PC-9 (cell line): ENCODE measurements at regions of chr10 and their contacts with region 1.

Region 1: DNA sequence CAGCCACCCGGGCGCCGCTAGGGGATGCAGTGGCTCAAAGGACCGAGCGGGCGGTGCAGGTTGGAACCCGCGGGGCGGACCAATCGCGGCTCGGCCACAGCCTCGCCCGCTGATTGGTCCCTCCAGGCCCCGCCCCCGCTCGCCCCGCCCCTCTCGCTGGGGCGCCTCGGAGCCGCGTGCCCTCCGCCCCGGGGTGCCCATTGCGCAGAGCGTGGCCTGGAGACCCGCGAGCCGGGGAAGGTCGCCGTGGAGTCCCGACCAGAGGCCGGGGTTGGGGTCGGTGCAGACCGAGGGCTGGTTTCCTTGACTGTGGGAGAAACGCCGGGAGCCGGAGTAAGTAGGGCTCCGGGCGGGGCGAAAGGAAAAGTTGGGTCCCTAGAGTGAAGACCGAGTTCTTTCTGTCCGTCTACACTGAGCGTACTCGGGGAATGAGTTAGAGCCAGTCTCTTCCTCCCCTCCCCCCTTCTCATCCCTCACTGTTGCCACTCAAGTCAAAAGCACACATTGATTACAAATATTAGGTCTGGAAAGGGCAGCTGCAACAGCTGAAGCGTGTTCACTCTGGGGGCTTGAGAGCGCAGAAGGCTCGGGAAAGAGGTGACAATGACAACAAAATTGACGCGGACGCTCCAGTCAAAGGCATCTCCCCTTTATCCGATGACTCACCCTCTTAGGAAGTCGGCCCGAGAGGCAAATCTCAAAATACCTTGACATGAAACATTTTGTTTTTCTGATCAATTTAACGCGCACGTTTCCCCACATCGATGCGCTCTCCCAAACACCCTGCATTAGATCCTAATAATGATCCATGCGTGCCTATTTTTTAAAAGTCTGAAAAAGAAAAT is 820 bp upstream of the GATA3 start:
- DNase-seq: peak; percentile 52 to 87
- H3K4me3 ChIP-seq: peak overlapping the region; percentile 59
- H3K27ac ChIP-seq: peak overlapping the region; percentile 87
- H3K4me1 ChIP-seq: no peaks in the 10 kb centered on the region
- H3K27me3 ChIP-seq: no peaks in the 10 kb centered on the region
- CTCF ChIP-seq: no peak; the same call in 1 of the 2 replicates

Region 2: GRCh38 chr10:7561216-7561893 is 492.3 kb before region 1 on chr10:
- CTCF ChIA-PET with region 1: no interaction called
- POLR2A ChIA-PET with region 1: no interaction called
- intact Hi-C with region 1: no loop called
- DNase-seq: no peak
- H3K4me3 ChIP-seq: no peak overlapping the region
- H3K27ac ChIP-seq: no peak overlapping the region
- H3K4me1 ChIP-seq: no peaks in the 10 kb centered on the region
- H3K27me3 ChIP-seq: peaks cover 47% of the 10 kb centered on the region
- CTCF ChIP-seq: no peak

Region 3: GRCh38 chr10:8026346-8027240 is 27.1 kb before region 1 on chr10:
- CTCF ChIA-PET with region 1: no interaction called
- POLR2A ChIA-PET with region 1: no interaction called
- intact Hi-C with region 1: no loop called
- DNase-seq: no peak
- H3K4me3 ChIP-seq: no peak overlapping the region
- H3K27ac ChIP-seq: no peak overlapping the region
- H3K4me1 ChIP-seq: no peaks in the 10 kb centered on the region
- H3K27me3 ChIP-seq: no peaks in the 10 kb centered on the region
- CTCF ChIP-seq: no peak

Region 4: GRCh38 chr10:8193546-8193945 is 139.9 kb after region 1 on chr10:
- CTCF ChIA-PET with region 1: no interaction called
- POLR2A ChIA-PET with region 1: no interaction called
- intact Hi-C with region 1: loop called (anchors 2 kb)
- DNase-seq: peak; percentile 37 to 93
- H3K4me3 ChIP-seq: peak overlapping the region; percentile 52; the same call in 1 of the 2 replicates
- H3K27ac ChIP-seq: peak overlapping the region; percentile 99
- H3K4me1 ChIP-seq: peaks cover 32% of the 10 kb centered on the region
- H3K27me3 ChIP-seq: no peaks in the 10 kb centered on the region
- CTCF ChIP-seq: no peak

Region 5: DNA sequence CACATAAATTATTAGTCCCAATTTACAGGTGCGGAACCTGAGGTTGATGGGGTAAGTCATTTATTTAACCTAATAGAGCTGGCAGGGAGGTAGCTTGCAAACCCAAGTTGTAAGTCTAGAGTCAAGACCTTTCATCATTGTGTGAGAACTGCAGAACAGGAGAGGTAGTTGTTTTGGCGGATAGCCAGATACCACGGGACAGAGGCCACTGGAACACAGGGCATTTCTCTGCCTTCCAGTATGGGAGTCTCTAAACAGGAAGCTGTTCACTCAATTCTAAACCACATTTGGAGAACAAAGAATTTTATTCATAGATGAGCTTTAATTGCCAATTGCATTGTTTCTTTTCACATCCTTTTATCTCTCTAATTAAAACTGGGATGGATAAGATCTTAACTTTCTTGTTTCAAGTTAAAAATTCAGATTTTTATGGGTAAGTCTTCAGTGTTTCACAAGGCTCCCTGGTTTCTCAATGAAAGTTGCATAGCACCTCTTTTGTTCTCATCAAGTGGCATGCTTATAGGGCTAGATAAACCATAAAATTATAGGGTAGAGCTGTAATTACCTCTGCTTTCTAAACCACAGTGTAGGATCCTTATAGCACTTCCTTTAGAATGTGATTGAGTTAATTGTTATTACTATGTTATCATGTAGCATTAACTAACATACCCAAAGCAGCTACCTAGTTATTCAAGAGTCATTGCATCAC is 489.8 kb after region 1 on chr10:
- CTCF ChIA-PET with region 1: no interaction called
- POLR2A ChIA-PET with region 1: interaction called, 4 read pairs
- intact Hi-C with region 1: loop called (anchors 10 kb)
- DNase-seq: peak; percentile 68 to 85
- H3K4me3 ChIP-seq: no peak overlapping the region; the same call in 1 of the 2 replicates
- H3K27ac ChIP-seq: peak overlapping the region; percentile 99
- H3K4me1 ChIP-seq: peaks cover 39% of the 10 kb centered on the region
- H3K27me3 ChIP-seq: no peaks in the 10 kb centered on the region
- CTCF ChIP-seq: no peak

Region 6: DNA sequence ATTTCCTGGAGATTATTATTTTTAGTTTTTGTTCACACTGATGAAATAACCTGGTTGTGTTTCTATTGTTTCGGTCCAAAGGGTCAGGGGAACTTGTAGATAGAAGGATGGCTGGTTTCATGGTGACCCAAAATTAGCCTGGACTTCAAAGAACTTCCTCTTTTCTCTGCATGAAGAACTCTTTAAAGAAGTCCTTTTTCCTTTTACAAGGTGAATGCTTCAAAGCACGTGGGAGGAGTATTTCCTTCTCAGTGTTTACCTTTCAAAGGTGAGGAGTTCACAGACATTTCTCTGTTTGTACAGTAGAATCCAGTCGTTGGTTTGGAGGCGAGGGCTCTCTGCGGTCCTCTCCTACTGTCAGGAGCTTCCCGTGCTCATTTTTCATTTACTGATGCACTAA is 562.5 kb after region 1 on chr10:
- CTCF ChIA-PET with region 1: no interaction called
- POLR2A ChIA-PET with region 1: no interaction called
- intact Hi-C with region 1: loop called (anchors 5 kb)
- DNase-seq: peak; percentile 43 to 80
- H3K4me3 ChIP-seq: no peak overlapping the region
- H3K27ac ChIP-seq: peak overlapping the region; percentile 70
- H3K4me1 ChIP-seq: peaks cover 36% of the 10 kb centered on the region
- H3K27me3 ChIP-seq: no peaks in the 10 kb centered on the region
- CTCF ChIP-seq: no peak

Region 7: DNA sequence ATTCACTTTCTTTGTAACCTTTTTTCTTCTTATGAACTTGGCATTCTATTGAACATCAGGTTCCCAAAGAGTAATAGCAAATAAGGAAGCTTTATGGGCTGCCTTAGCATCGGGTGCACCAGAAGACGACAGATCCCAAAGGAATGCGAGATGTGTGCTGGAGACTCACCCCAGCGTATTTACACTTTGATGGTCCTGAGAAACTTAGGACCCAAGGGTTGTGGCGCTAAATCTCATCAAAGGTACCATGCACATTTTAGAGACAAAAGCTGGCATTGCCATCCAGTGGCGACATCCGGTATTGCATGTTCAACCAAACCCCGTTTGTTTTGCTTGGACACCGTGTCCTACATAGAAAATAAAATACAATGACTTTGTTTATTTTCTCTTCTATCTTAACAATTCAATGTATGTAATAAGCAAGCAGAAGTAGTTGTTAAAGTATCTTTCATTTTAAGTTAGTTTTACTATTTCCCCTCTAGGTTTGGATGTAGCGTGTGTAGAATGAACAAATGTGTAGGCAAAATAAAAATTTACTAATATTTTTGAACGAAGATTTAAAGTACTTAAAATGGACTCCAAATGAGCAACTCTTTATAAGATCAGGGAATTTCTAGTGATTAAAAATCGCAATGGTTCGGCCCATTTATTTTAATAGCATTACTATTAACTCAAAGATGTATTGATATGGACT is 1155.6 kb after region 1 on chr10:
- CTCF ChIA-PET with region 1: no interaction called
- POLR2A ChIA-PET with region 1: no interaction called
- intact Hi-C with region 1: loop called (anchors 5 kb)
- DNase-seq: peak; percentile 61 to 69
- H3K4me3 ChIP-seq: no peak overlapping the region
- H3K27ac ChIP-seq: no peak overlapping the region
- H3K4me1 ChIP-seq: no peaks in the 10 kb centered on the region
- H3K27me3 ChIP-seq: no peaks in the 10 kb centered on the region
- CTCF ChIP-seq: peak; percentile 87